ENCODE measurements at regions of chr9 and their contacts with region 1.

Region 1: DNA sequence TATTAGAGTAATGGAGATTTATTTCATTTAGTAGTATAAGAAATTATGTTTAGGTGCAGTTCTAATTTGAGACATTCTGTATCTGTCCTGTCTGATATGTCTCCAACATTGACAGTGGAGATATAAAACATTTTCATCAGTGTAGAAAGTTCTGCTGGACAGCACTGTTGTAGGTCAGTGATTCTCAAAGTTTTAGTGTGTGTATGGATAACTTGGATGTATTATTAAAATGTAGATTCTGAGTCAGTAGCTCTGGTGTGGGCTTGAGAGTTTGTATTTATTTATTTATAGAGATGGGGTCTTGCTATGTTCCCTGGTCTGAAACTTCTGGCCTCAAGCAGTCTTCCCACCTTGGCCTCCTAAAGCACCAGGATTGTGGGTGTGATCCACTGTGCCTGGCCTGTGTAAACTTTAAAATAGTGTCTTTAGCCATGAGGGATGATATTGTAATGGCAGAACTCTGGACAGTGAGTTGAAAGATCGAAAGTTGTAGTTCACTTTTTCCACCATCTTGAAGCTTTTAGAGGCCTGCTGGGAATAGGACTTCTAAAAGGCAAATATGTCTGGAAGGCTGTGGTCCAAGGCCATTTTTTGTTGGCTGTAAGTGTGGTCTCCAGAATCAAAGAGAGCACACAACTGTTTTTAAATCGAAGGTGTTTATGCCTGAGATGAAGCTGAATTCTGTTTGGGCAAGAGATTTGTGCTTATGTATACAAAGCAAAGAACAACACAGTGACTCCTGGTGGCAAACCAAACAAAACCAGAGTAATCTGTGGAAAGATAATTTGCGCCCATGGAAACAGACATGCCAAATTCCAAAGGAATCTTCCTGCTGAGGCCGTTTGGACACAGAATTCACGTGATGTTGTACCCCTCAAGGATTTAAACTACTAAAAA is 12.4 kb downstream of the UBAP1 start:
- DNase-seq: no peak
- ATAC-seq: no peak
- H3K4me3 ChIP-seq: no peak overlapping the region
- H3K27ac ChIP-seq: peak overlapping the region; percentile 25 to 97 (median 33)
- H3K4me1 ChIP-seq: peaks cover 53 to 63% of the 10 kb centered on the region in 2 donors
- H3K27me3 ChIP-seq: no peaks in the 10 kb centered on the region
- CTCF ChIP-seq: no peak
- POLR2A ChIP-seq: no peak

Region 2: GRCh38 chr9:34139477-34140146 is 51.6 kb before region 1 on chr9:
- in situ Hi-C with region 1: no loop called
- intact Hi-C with region 1: no loop called
- DNase-seq: peak in 1 of 2 donors; percentile 17
- ATAC-seq: peak in 1 of 2 donors; percentile 39
- H3K4me3 ChIP-seq: no peak overlapping the region
- H3K27ac ChIP-seq: no peak overlapping the region
- H3K4me1 ChIP-seq: no peaks in the 10 kb centered on the region
- H3K27me3 ChIP-seq: no peaks in the 10 kb centered on the region
- CTCF ChIP-seq: no peak
- POLR2A ChIP-seq: no peak

Region 3: GRCh38 chr9:34158362-34158869 is 32.8 kb before region 1 on chr9:
- in situ Hi-C with region 1: no loop called
- intact Hi-C with region 1: no loop called
- DNase-seq: no peak
- ATAC-seq: peak in 1 of 2 donors; percentile 54
- H3K4me3 ChIP-seq: no peak overlapping the region
- H3K27ac ChIP-seq: peak overlapping the region in 2 of 4 donors; percentile 19 to 39
- H3K4me1 ChIP-seq: peaks cover 9 to 19% of the 10 kb centered on the region in 2 donors
- H3K27me3 ChIP-seq: no peaks in the 10 kb centered on the region
- CTCF ChIP-seq: no peak
- POLR2A ChIP-seq: no peak

Region 4: DNA sequence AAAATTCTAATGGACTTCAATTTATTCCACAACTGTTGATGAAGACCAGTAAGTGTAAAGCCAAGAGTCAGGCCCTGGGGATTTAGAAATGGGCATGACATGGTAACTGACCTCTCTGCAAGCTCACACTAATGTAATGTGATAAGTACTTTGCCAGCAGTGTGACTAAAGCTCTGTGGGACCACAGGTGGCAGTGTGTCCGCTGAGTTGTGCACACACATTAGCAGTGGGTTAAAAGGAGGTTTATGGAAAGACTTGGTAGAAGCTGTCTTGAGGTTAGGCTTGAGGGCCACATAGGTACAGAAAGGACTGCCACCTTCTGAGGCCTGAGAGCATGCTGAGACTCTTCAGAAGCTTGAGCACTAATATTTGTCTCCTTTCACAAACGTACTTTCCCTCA is 55.2 kb after region 1 on chr9:
- in situ Hi-C with region 1: loop called in 2 of 4 experiments (anchors 5 kb)
- intact Hi-C with region 1: loop called (anchors 1 kb)
- DNase-seq: peak; percentile 70 to 71
- ATAC-seq: peak; percentile 80 to 90
- H3K4me3 ChIP-seq: no peak overlapping the region
- H3K27ac ChIP-seq: peak overlapping the region; percentile 82 to 98 (median 88)
- H3K4me1 ChIP-seq: peaks cover 49 to 52% of the 10 kb centered on the region in 2 donors
- H3K27me3 ChIP-seq: no peaks in the 10 kb centered on the region
- CTCF ChIP-seq: peak in 1 of 5 experiments; percentile 22
- POLR2A ChIP-seq: peak in 1 of 2 donors; percentile 31